ENCODE measurements at regions of chr4 and their contacts with region 1.

Region 1: GRCh38 chr4:185304944-185305690 is 90.6 kb downstream of the LRP2BP start:
- DNase-seq: peak; percentile 25
- ATAC-seq: peak; percentile 48
- H3K4me3 ChIP-seq: no peak overlapping the region
- H3K27ac ChIP-seq: no peak overlapping the region
- H3K4me1 ChIP-seq: peaks cover 11% of the 10 kb centered on the region
- H3K27me3 ChIP-seq: no peaks in the 10 kb centered on the region
- CTCF ChIP-seq: peak; percentile 46
- POLR2A ChIP-seq: no peak
- RAD21 ChIP-seq: peak; percentile 45

Region 2: DNA sequence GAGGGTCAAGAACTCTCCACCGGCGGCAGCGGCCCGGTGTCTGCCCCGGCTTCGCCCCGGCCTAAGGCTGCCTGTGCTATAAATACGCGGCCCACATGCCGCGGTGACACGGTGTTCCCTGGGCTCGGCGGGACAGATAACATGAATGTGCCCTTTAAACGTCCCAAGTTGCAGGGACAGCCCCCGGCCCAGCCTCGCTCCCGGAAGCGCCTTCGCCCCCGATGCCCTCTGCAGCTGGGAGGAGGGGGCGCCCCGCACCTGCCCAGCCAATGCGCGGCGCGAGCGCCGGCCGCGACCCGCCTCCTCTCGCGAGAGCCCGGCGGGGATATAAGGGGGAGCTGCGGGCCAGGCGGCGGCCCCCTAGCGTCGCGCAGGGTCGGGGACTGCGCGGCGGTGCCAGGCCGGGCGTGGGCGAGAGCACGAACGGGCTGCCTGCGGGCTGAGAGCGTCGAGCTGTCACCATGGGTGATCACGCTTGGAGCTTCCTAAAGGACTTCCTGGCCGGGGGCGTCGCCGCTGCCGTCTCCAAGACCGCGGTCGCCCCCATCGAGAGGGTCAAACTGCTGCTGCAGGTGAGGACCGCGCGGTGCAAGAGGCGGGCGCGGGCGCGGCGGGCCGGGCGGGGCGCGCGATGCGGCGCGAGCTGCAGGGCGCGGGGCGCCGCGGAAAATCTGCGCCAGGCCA is 162.1 kb before region 1 on chr4 and contains the start of gene SLC25A4:
- CTCF ChIA-PET with region 1: no interaction called
- POLR2A ChIA-PET with region 1: no interaction called
- dilution Hi-C with region 1: no loop called
- in situ Hi-C with region 1: no loop called
- intact Hi-C with region 1: loop called (anchors 5 kb)
- DNase-seq: peak; percentile 62
- ATAC-seq: peak; percentile 98
- H3K4me3 ChIP-seq: peak within 1 kb of the TSS; percentile 81
- H3K27ac ChIP-seq: no peak within 1 kb of the TSS; the same call in 1 of the 2 replicates
- H3K4me1 ChIP-seq: no peaks in the 10 kb centered on the region; the same call in 1 of the 2 replicates
- H3K27me3 ChIP-seq: peaks cover 5% of the 10 kb centered on the region
- CTCF ChIP-seq: peak; percentile 53
- POLR2A ChIP-seq: peak; percentile 92
- RAD21 ChIP-seq: no peak; the same call in 1 of the 2 replicates
- total RNA-seq, gene SLC25A4: 16.0 and 21.9 TPM in 2 replicates

Region 3: GRCh38 chr4:185219551-185220344 is 85.4 kb before region 1 on chr4:
- CTCF ChIA-PET with region 1: no interaction called
- POLR2A ChIA-PET with region 1: no interaction called
- dilution Hi-C with region 1: no loop called
- in situ Hi-C with region 1: no loop called
- intact Hi-C with region 1: loop called (anchors 5 kb)
- DNase-seq: peak; percentile 78
- ATAC-seq: no peak
- H3K4me3 ChIP-seq: no peak overlapping the region
- H3K27ac ChIP-seq: no peak overlapping the region
- H3K4me1 ChIP-seq: peaks cover 10% of the 10 kb centered on the region
- H3K27me3 ChIP-seq: no peaks in the 10 kb centered on the region
- CTCF ChIP-seq: no peak
- POLR2A ChIP-seq: no peak
- RAD21 ChIP-seq: no peak